ENCODE measurements at regions of chr3 and their contacts with region 1.

Region 1: DNA sequence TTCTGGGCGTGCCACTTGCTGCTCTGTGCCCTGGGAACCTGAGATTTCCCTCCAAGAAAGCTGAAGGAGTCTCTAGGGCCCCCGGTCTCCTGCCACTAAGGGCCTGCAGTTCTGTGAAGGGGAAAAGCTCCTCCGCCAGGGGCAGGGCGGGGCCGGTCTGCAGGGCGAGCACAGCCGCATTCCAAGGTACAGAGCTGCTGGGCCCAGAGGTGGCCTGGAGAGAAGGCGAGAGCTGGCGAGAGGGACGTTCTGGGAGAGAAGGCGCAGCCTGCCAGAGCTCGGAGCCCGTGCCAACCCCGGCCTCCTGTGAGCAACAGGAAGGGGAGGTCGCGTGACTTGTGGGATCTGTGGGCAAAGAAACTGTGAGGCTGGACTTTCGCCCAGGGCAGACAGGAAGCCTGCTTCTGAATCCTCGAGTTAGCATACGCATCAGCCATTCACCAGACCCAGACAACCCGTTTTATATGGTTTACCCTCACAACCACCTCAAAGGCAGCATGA is 500.4 kb downstream of the SHQ1 start:
- DNase-seq: peak in 9 of 14 experiments; percentile 12 to 71 (median 42)
- ATAC-seq: peak; percentile 32
- H3K4me3 ChIP-seq: no peak overlapping the region
- H3K4me3 Mint-ChIP-seq: no peak overlapping the region
- H3K27ac ChIP-seq: no peak overlapping the region
- H3K27ac Mint-ChIP-seq: peak overlapping the region; percentile 45
- H3K4me1 ChIP-seq: peaks cover 44% of the 10 kb centered on the region
- H3K4me1 Mint-ChIP-seq: peaks cover 68% of the 10 kb centered on the region
- H3K27me3 ChIP-seq: no peaks in the 10 kb centered on the region
- H3K27me3 Mint-ChIP-seq: no peaks in the 10 kb centered on the region
- CTCF ChIP-seq: no peak

Region 2: DNA sequence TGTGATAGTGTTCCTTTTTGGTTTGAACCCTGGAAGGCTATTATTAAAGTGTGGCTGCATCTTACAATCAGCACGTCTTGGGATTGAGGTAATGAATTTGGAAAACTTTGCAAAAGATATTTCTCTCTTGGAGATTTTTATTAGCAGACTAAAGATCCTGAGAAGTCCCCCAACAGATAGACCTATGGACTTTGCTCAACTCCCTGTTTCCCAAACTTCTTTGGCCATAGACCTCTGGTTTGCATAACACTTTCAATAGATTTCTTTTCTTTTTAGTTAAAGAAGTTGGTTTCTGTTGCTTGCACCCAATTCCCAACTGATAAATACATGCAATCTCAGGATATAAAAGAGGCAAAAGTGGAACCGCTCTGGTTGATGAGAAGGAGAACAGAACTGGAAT is 97.1 kb before region 1 on chr3:
- CTCF ChIA-PET with region 1: no interaction called
- POLR2A ChIA-PET with region 1: no interaction called
- intact Hi-C with region 1: loop called in 1 of 2 experiments (anchors 5 kb)
- DNase-seq: no peak
- ATAC-seq: no peak
- H3K4me3 ChIP-seq: no peak overlapping the region
- H3K4me3 Mint-ChIP-seq: no peak overlapping the region
- H3K27ac ChIP-seq: no peak overlapping the region
- H3K27ac Mint-ChIP-seq: no peak overlapping the region
- H3K4me1 ChIP-seq: peaks cover 2% of the 10 kb centered on the region
- H3K4me1 Mint-ChIP-seq: peaks cover 2% of the 10 kb centered on the region
- H3K27me3 ChIP-seq: no peaks in the 10 kb centered on the region
- H3K27me3 Mint-ChIP-seq: no peaks in the 10 kb centered on the region
- CTCF ChIP-seq: no peak

Region 3: DNA sequence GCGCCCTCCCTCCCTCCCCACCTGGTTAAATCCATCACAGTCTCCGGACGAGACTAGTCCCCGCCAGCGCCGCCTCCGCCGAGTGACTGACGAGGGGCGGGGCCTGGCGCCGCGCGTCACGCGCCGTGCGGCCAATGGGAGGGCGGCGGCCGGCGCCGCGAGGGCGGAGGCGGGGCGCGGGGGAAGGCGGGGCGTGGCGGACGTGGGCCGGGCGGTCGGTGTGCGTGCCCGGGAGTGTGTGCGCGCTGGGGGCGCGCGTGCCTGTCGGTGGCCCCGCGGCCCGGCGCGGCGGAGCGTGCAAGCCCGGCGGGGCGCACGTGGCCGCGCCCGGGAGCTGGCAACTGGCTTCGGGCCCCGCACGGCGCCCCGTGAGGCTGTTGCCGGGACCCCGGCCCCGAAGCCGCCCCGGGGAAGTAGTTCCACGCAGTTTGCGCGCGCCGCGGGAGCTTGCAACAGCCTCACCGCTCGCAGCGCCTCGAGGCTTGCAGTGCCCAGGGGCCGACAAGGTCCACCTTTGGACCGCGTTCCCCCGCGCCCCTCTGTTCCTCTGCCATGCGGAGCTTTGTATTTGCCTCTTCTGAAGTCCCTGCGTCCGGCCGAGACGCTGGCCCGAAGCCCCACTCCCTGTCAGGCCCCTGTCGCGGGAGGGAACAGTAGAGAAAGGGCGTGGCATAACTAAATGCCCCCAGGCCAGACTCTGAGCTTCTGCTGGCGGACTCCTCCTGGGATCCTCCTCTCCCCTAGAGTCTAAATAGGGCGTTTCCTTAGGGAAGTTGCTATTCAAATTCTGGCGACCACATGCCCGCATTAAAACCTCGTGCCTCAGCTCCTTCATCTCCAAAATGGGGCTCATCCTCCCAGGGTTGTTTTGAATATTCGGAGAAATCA is 99.4 kb after region 1 on chr3:
- CTCF ChIA-PET with region 1: no interaction called
- POLR2A ChIA-PET with region 1: interaction called, 3 read pairs
- intact Hi-C with region 1: loop called in 1 of 2 experiments (anchors 1 kb)
- DNase-seq: peak; percentile 86 to 98 (median 93)
- ATAC-seq: peak; percentile 89
- H3K4me3 ChIP-seq: peak overlapping the region; percentile 69
- H3K4me3 Mint-ChIP-seq: peak overlapping the region; percentile 85
- H3K27ac ChIP-seq: peak overlapping the region in 1 of 2 donors; percentile 55
- H3K27ac Mint-ChIP-seq: peak overlapping the region; percentile 74
- H3K4me1 ChIP-seq: peaks cover 16% of the 10 kb centered on the region
- H3K4me1 Mint-ChIP-seq: peaks cover 43% of the 10 kb centered on the region
- H3K27me3 ChIP-seq: no peaks in the 10 kb centered on the region
- H3K27me3 Mint-ChIP-seq: no peaks in the 10 kb centered on the region
- CTCF ChIP-seq: peak; percentile 13

Measured in CD4-positive, alpha-beta T cell (primary cell).